ENCODE measurements at regions of chr1 and their contacts with region 1.

Region 1: DNA sequence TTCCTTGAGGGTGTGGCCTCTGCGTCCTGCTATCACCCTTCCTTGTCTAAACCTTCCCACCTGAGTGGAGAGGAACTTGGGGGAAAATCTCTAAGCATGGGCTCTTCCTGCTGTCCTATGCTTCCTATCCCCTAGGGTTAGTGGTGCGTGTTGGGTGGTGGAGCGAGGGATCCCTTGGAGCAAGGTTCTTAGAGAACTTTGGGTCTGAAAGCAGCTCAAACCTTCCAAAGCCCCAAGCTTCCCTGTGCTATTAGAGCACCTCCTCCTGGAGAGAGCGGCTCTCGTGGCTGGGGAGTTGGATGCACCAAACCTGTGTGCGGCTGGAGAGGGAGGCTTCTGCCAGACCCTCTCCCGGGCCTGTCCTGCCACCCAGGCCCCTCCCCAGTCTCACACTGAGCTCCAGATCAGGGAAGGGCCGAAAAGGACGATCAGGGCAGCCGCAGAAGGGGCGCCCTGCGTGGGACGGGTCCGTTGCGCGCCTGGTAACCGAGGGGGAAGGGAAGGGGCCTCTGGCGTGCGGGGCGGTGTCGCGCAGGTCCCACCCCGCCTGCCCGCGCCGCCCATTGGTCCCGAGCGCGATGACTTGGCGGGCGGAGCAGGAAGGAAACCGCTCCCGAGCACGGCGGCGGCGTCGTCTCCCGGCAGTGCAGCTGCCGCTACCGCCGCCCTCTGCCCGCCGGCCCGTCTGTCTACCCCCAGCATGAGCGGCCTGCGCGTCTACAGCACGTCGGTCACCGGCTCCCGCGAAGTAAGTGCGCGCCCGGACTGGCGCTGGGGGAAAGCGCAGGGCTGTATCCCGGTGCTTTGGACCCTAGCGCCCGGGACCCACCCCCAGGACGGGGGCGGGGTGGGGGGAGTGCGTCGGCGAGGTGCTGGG is at the start of gene SH3BGRL3:
- DNase-seq: peak; percentile 85
- H3K4me3 Mint-ChIP-seq: peak within 1 kb of the TSS; percentile 92
- H3K27ac Mint-ChIP-seq: peak within 1 kb of the TSS; percentile 99
- H3K4me1 Mint-ChIP-seq: peaks cover 78% of the 10 kb centered on the region
- H3K27me3 Mint-ChIP-seq: no peaks in the 10 kb centered on the region
- total RNA-seq, gene SH3BGRL3: 551 and 575 TPM in 2 replicates

Region 2: GRCh38 chr1:26097696-26098095 is 182.0 kb before region 1 on chr1:
- intact Hi-C with region 1: no loop called
- DNase-seq: no peak
- H3K4me3 Mint-ChIP-seq: no peak overlapping the region
- H3K27ac Mint-ChIP-seq: no peak overlapping the region
- H3K4me1 Mint-ChIP-seq: peaks cover 6% of the 10 kb centered on the region
- H3K27me3 Mint-ChIP-seq: peaks cover 28% of the 10 kb centered on the region

Region 3: DNA sequence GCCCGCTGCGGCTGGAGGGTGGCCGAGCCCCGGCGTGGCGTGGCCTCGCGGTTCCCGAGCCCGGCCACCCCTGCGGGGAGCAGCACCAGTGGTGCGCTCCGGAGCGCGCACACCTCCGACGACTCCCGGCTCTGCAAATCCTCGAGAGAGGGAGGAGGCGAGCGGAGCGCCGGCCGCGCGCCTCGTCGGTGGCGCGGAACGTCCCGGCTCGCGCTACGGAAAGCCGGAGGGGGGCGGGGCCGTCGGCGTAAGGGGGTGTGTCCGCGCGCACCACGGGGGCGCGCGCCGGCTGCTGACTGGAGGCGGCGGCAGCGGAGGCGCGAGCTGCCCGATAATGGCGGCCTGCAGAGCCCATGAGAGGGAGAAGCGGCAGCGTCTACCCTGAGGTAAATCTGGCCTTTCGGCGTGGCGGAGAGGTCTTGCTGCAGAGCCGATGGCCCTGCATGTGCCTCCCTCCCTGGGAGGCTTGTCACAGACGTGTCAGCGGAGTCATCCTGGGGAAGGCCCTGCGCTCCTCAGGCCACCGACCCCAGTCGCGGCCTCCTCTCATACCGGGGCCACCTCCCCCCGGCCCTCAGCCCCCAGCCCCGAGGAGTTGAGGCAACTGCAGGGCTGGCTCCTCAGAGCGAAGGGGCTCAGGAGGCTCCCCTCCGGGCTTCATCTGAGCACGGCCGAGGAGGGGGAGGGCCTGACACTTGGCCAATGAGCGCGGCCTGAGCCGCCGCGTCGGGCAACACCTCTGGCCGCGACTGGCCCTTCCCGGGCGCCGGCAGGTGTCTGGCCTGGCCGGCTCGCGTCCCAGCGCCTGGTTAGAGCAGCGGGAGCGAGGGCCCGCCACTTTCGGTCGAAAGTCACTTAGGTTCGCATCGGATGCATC is 167.9 kb before region 1 on chr1 and contains the start of gene PDIK1L:
- intact Hi-C with region 1: loop called (anchors 2 kb)
- DNase-seq: peak; percentile 91
- H3K4me3 Mint-ChIP-seq: peak within 1 kb of the TSS; percentile 96
- H3K27ac Mint-ChIP-seq: peak within 1 kb of the TSS; percentile 92
- H3K4me1 Mint-ChIP-seq: peaks cover 36% of the 10 kb centered on the region
- H3K27me3 Mint-ChIP-seq: no peaks in the 10 kb centered on the region
- total RNA-seq, gene PDIK1L: 15.5 and 18.9 TPM in 2 replicates

Region 4: DNA sequence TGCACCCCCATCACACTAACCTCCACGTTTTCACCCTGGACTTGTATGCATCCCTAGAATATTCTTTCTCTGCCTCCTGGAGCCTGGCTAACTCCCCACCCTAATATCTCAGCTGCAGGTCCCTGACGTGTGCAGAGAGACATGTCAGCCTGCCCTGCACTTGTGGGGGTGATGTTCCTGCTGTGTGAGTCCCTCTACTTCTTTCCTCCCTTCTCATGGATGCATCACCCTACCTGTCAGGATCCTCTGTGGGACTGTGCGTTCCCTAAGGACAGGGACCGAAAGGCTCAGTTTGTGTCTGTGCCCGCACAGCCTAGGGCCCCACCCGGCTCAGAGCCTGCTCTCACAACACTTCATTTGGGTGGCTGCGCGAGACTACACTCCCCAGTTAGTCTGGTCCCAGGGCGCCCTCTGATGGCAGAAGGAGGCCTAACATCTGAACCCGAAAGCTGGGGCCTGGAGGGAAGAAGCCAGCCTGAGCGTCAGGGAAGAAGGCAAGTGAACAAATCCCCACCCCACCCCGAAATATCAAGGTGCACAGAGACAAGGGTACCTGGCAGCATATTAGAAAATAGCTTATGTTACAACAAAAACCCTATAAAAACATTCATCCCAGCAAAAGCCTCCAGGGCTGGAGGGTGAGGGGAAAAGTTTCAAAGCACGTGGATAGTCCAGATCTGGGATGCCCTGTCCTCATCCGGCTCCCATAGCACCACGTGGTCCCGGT is 41.8 kb after region 1 on chr1:
- intact Hi-C with region 1: loop called (anchors 1 kb)
- DNase-seq: peak; percentile 88
- H3K4me3 Mint-ChIP-seq: peak overlapping the region; percentile 85
- H3K27ac Mint-ChIP-seq: peak overlapping the region; percentile 94
- H3K4me1 Mint-ChIP-seq: peaks cover 55% of the 10 kb centered on the region
- H3K27me3 Mint-ChIP-seq: no peaks in the 10 kb centered on the region

Region 5: DNA sequence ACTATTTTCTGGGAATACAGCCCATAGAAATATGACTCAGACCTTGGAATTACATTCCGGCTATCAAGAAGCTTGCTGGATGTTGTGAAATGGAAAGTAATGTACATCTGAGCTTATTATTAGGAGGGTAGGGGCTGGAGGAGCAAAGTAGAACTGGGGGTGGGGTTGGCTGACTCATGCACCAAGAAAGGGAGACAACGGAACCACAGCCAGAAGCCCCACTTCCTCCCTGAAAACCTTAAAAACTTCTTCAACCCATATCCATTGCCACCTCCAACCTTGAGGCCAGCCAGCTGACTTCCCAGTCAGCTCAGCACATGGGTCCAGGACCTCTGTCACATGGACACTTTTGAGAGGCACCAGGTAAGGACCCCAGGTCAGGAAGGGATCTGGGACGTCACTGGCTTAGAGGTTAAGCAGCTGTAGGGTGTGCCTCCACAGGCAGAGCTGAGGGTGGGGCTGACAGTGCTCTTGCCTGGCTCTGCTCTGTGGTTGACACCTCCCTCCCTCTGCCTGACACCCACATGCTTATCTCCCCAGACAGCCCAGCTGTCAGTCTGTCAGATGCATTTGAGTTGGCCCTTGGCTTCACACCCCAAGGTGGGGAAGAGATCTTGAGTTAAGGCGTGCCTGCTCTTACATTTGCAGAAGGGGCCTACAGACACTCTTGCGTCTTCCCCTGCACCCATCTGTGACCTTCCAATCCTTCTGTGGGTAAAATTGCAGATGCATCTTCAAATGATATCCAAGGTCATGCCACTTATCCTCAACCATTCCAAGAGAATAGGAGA is 98.6 kb after region 1 on chr1:
- intact Hi-C with region 1: loop called (anchors 1 kb)
- DNase-seq: peak; percentile 82
- H3K4me3 Mint-ChIP-seq: peak overlapping the region; percentile 69
- H3K27ac Mint-ChIP-seq: peak overlapping the region; percentile 76
- H3K4me1 Mint-ChIP-seq: peaks cover 66% of the 10 kb centered on the region
- H3K27me3 Mint-ChIP-seq: peaks cover 3% of the 10 kb centered on the region

Region 6: GRCh38 chr1:26417111-26417759 is 137.5 kb after region 1 on chr1:
- intact Hi-C with region 1: loop called (anchors 1 kb)
- DNase-seq: peak; percentile 75
- H3K4me3 Mint-ChIP-seq: no peak overlapping the region
- H3K27ac Mint-ChIP-seq: no peak overlapping the region
- H3K4me1 Mint-ChIP-seq: no peaks in the 10 kb centered on the region
- H3K27me3 Mint-ChIP-seq: peaks cover 54% of the 10 kb centered on the region